Posterior cingulate gyrus (tissue), 11 donors: ENCODE measurements at regions of chr17 and their contacts with region 1.

Region 1: DNA sequence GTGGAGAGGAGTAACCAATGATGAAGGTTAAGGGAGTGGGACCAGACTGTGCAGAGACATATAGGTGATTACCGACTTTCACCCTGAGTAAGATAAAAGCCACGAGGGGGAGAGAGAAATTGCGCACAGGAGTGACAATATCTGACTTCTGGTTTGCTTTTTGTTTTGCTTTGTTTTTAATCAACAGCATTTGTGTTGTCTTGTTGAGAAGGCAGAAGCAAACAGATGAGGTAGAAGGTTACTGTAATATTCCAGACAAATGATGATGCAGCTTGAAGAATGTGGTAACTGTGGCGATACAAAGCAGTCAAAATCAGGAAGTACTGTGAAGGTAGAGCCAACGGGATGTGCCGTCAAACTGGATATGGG is 7.5 kb downstream of the PELP1 start:
- DNase-seq: no peak

Region 2: GRCh38 chr17:4573669-4574068 is 122.8 kb before region 1 on chr17:
- intact Hi-C with region 1: loop called (anchors 10 kb)
- DNase-seq: peak in 1 of 10 donors; percentile 53